ENCODE measurements at regions of chr4 and their contacts with region 1.

Region 1: GRCh38 chr4:94507708-94508107 is 56.0 kb downstream of the PDLIM5 start:
- DNase-seq: no peak
- H3K4me3 ChIP-seq: no peak overlapping the region
- H3K27ac ChIP-seq: peak overlapping the region; percentile 45 to 56 (median 52)
- H3K4me1 ChIP-seq: peaks cover 43 to 76% (median 65%) of the 10 kb centered on the region in 4 donors
- H3K27me3 ChIP-seq: no peaks in the 10 kb centered on the region
- CTCF ChIP-seq: no peak
- EP300 ChIP-seq: no peak
- POLR2A ChIP-seq: no peak

Region 2: GRCh38 chr4:94274912-94275311 is 232.8 kb before region 1 on chr4:
- intact Hi-C with region 1: no loop called
- DNase-seq: no peak
- H3K4me3 ChIP-seq: no peak overlapping the region
- H3K27ac ChIP-seq: no peak overlapping the region
- H3K4me1 ChIP-seq: no peaks in the 10 kb centered on the region
- H3K27me3 ChIP-seq: no peaks in the 10 kb centered on the region
- CTCF ChIP-seq: no peak
- EP300 ChIP-seq: no peak
- POLR2A ChIP-seq: no peak

Region 3: GRCh38 chr4:94442251-94442650 is 65.5 kb before region 1 on chr4:
- intact Hi-C with region 1: no loop called
- DNase-seq: no peak
- H3K4me3 ChIP-seq: no peak overlapping the region
- H3K27ac ChIP-seq: no peak overlapping the region
- H3K4me1 ChIP-seq: no peaks in the 10 kb centered on the region
- H3K27me3 ChIP-seq: no peaks in the 10 kb centered on the region
- CTCF ChIP-seq: no peak
- EP300 ChIP-seq: no peak
- POLR2A ChIP-seq: no peak

Region 4: GRCh38 chr4:94457692-94458106 is 50.0 kb before region 1 on chr4:
- intact Hi-C with region 1: loop called (anchors 2 kb)
- DNase-seq: no peak
- H3K4me3 ChIP-seq: peak overlapping the region in 3 of 4 donors; percentile 15 to 29 (median 25)
- H3K27ac ChIP-seq: peak overlapping the region; percentile 61 to 99 (median 80)
- H3K4me1 ChIP-seq: peaks cover 10 to 100% (median 90%) of the 10 kb centered on the region in 4 donors
- H3K27me3 ChIP-seq: no peaks in the 10 kb centered on the region
- CTCF ChIP-seq: no peak
- EP300 ChIP-seq: peak; percentile 66
- POLR2A ChIP-seq: no peak

Region 5: DNA sequence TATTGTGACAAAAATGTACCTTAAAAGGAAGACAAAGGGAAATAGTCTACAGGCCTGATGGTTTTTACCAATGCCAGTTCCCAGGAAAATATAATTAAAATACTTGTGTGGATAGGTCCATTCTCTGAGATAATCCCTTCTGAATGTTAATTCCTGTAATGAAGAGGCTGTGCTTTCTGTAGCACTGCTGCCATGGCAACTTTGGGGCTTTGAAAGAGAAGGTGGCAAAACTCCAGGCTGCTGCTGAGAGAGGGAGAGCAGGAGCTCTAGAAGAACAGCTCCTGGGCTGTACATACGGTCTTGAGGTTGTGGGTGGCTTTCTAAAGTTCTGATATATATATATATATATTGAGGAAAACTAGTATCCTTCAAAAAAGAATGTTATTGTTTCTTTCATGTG is 69.4 kb after region 1 on chr4:
- intact Hi-C with region 1: no loop called
- DNase-seq: no peak
- H3K4me3 ChIP-seq: no peak overlapping the region
- H3K27ac ChIP-seq: no peak overlapping the region
- H3K4me1 ChIP-seq: peaks cover 39 to 61% (median 44%) of the 10 kb centered on the region in 4 donors
- H3K27me3 ChIP-seq: no peaks in the 10 kb centered on the region
- CTCF ChIP-seq: no peak
- EP300 ChIP-seq: no peak
- POLR2A ChIP-seq: no peak

Region 6: DNA sequence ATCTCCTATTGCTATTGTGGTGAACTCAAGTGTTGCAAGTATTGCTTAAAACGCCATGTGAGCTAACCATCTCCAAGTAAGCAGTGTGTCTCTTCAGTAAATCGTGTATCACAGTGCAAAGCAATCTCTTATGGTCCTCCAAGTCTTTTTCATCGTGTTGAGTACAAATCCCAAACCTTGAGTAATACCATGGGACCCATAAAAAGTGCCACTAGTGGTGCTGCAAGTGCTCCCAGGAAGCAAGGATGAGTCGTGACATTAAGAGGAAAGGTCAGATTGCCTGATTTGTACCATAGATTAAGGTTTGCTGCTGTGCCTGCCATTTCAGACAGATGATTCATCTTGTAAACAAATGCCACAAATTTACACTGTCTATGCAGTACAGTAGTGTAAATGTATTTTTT is 183.1 kb after region 1 on chr4:
- intact Hi-C with region 1: no loop called
- DNase-seq: no peak
- H3K4me3 ChIP-seq: no peak overlapping the region
- H3K27ac ChIP-seq: no peak overlapping the region
- H3K4me1 ChIP-seq: no peaks in the 10 kb centered on the region
- H3K27me3 ChIP-seq: no peaks in the 10 kb centered on the region
- CTCF ChIP-seq: no peak
- EP300 ChIP-seq: no peak
- POLR2A ChIP-seq: no peak